Breast epithelium (tissue), 4 donors: ENCODE measurements at regions of chr2 and their contacts with region 1.

Region 1: GRCh38 chr2:73759285-73759764 is 20.6 kb downstream of the DUSP11 start:
- DNase-seq: no peak
- H3K4me3 ChIP-seq: no peak overlapping the region
- H3K27ac ChIP-seq: no peak overlapping the region
- H3K4me1 ChIP-seq: no peaks in the 10 kb centered on the region
- H3K27me3 ChIP-seq: no peaks in the 10 kb centered on the region
- CTCF ChIP-seq: no peak
- POLR2A ChIP-seq: no peak

Region 2: DNA sequence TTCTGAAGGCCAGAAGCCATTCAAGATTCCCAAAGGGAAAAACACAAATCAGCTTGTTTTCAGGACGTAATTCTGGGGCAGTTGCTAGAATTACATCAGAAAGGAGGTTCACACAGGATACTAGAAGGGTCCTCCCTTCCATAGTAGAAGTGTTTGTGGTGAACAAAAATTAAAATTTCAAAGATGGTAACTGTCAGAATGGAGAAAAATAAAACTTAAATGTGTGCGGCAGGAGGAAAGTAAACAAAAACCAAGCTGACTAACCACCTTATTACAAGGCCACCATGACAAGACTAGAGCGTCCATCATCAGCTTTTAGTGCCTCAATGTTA is 12.5 kb before region 1 on chr2:
- intact Hi-C with region 1: loop called (anchors 1 kb)
- DNase-seq: no peak
- H3K4me3 ChIP-seq: no peak overlapping the region
- H3K27ac ChIP-seq: no peak overlapping the region
- H3K4me1 ChIP-seq: no peaks in the 10 kb centered on the region
- H3K27me3 ChIP-seq: no peaks in the 10 kb centered on the region
- CTCF ChIP-seq: no peak
- POLR2A ChIP-seq: no peak

Region 3: GRCh38 chr2:73779467-73780236 is 20.3 kb after region 1 on chr2 and contains the start of gene DUSP11:
- intact Hi-C with region 1: no loop called
- DNase-seq: peak; percentile 93 to 95
- H3K4me3 ChIP-seq: peak within 1 kb of the TSS; percentile 90 to 96 (median 93)
- H3K27ac ChIP-seq: peak within 1 kb of the TSS; percentile 95 to 97
- H3K4me1 ChIP-seq: no peaks in the 10 kb centered on the region
- H3K27me3 ChIP-seq: no peaks in the 10 kb centered on the region
- CTCF ChIP-seq: peak; percentile 87 to 92 (median 90)
- POLR2A ChIP-seq: peak; percentile 84
- total RNA-seq, gene DUSP11: 28.8 to 49.9 (median 36.1) TPM

Region 4: GRCh38 chr2:74619651-74620297 is 860.4 kb after region 1 on chr2:
- intact Hi-C with region 1: no loop called
- DNase-seq: no peak
- H3K4me3 ChIP-seq: no peak overlapping the region
- H3K27ac ChIP-seq: no peak overlapping the region
- H3K4me1 ChIP-seq: no peaks in the 10 kb centered on the region
- H3K27me3 ChIP-seq: no peaks in the 10 kb centered on the region
- CTCF ChIP-seq: no peak
- POLR2A ChIP-seq: no peak